Right ventricle myocardium inferior (tissue), 1 donor: ENCODE measurements at regions of chr9 and their contacts with region 1.

Region 1: GRCh38 chr9:135961277-135961705 is at the start of gene UBAC1:
- DNase-seq: peak; percentile 99
- ATAC-seq: peak; percentile 88
- total RNA-seq, gene UBAC1: 119 TPM

Region 2: GRCh38 chr9:134226221-134226930 is 1734.9 kb before region 1 on chr9:
- intact Hi-C with region 1: no loop called
- DNase-seq: peak; percentile 62
- ATAC-seq: no peak

Region 3: GRCh38 chr9:134944351-134944802 is 1016.9 kb before region 1 on chr9:
- intact Hi-C with region 1: no loop called
- DNase-seq: peak; percentile 63
- ATAC-seq: peak; percentile 48

Region 4: DNA sequence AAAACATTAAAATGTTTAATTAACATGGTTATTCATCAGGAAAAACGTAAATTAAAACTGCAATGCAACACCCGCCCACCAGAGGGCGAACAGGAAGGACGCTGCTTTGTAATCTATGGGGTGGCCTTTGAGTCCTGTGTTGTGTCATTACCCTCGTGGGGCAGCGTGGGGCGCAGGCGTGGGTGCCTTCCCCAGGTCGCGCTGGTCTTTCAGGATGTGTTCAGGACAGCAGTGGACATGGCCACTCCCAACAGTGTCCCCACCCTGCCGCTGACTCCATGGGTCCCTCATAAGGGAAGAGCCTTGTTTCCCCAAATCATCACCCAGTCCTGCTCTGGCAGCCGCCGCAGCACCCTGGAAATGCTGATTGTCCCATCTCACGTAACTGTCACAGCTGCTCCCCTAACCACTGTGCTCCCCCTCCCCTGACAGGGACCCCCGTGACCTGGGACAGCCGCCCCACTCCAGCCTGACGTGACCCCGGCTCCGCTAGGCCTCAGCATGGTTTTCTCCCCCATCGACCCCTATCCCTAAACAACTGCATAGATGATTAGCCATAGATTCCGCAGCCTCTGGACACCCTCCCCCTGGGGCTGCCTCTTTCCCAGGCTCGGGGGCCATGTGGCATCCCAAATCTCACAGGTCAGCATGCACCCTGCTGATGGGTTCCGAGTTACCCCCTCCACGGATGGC is 358.4 kb before region 1 on chr9:
- intact Hi-C with region 1: loop called (anchors 10 kb)
- DNase-seq: peak; percentile 26
- ATAC-seq: no peak

Region 5: DNA sequence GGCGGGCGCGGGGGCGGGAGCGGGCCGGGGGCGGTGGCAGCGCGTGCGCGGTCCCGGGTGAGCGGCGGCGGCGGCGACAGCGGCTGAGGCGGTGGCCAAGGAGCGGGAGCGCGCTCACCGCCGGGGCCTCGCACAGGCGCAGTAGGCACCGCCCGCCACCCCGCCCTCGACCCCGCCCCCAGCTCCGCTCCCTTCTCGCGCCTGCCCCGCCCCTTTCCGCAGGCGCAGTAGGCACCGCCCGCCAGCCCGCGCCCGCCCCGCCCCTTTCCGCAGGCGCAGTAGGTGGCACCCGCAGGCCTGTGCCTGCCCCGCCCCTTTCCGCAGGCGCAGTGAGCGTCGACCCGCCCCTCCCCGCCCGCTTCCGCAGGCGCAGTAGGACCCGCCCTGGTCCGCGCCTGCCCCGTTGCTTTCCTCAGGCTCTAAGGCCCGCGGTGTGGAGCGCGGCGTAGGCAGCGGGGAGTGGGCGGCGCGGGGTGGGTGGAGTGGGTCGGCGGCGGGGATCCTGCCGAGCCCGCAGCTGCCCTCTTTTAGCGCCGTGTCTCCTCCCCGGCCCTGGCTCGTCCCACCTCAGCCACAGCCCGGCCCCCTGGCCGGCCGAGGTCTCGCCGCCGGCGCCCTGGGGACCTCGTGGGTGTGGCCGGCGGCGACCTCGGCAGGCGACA is 53.7 kb before region 1 on chr9 and contains the start of gene CAMSAP1:
- intact Hi-C with region 1: loop called (anchors 5 kb)
- DNase-seq: peak; percentile 96
- ATAC-seq: peak; percentile 98
- total RNA-seq, gene CAMSAP1: 17.6 TPM

Region 6: DNA sequence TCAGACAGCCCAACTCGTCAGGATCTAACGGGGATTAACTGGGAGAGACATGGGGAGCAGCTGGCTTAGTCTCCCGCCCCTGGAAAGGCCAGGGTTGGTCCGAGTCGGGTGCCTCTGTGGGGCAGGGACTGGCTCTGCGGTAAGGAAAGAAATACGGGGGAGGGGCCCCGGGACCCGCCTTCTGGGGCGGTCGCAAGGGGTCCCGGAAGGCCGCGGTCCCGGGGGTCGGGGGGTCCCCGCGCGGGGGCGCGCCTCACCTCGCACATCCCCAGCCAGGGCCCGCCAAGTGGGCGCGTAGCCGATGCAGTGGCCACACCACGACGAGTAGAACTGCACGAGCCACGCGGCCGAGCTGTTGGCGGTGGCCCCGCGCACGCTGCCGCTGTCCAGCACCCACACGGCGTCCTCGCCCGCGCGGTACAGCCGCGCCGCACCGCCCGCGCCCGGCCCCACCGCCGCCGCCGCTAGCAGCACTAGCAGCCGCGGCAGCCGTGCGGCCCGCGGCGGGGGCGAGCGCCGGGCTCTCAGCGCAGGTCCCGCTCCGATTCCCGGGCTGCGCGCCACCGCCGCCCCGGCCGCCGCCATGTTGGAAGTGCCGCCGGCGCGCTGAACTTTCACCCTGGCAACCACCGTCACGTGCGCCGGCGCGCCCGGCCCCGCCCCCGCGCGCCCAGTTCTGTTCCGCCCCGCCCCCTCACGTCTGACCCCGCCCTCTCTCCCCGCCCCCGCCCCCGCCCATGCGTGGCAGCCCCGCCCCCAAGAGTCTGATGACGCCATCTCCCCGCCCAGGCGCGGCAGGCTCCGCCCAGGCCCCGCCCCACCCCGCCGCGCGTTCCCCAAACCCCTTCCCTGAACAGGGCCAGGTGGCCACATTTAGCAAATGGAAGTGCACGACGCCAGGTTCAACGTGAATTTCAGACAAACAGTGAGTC is 284.2 kb after region 1 on chr9 and contains the start of gene QSOX2:
- intact Hi-C with region 1: loop called (anchors 10 kb)
- DNase-seq: peak; percentile 92
- ATAC-seq: peak; percentile 82
- total RNA-seq, gene QSOX2: 8.3 TPM

Region 7: DNA sequence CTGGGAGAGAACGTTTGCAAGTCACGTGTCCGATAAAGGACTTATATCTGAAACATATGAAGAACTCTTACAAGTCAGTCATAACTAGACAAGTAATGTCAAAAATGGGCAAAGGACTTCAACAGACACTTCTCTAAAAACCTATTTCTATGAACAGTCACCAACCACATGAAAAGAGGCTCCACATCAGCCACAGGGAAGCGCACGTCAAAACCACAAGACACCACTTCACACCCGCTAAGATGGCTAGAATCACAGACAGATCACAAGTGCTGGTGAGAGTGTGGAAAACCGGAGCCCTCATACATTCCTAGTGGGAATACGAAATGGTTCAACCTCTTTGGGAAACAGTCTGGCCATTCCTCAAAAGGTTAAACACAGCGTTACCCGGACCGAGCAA is 423.7 kb after region 1 on chr9:
- intact Hi-C with region 1: no loop called
- DNase-seq: no peak
- ATAC-seq: no peak